T-cell (primary cell): ENCODE measurements at regions of chr10 and their contacts with region 1.

Region 1: GRCh38 chr10:69303632-69304051 is 25.3 kb downstream of the HK1 start:
- DNase-seq: no peak
- ATAC-seq: no peak
- H3K4me3 ChIP-seq: no peak overlapping the region
- H3K4me3 Mint-ChIP-seq: no peak overlapping the region
- H3K27ac ChIP-seq: no peak overlapping the region
- H3K27ac Mint-ChIP-seq: no peak overlapping the region
- H3K4me1 ChIP-seq: no peaks in the 10 kb centered on the region
- H3K4me1 Mint-ChIP-seq: no peaks in the 10 kb centered on the region
- H3K27me3 ChIP-seq: no peaks in the 10 kb centered on the region
- H3K27me3 Mint-ChIP-seq: no peaks in the 10 kb centered on the region

Region 2: DNA sequence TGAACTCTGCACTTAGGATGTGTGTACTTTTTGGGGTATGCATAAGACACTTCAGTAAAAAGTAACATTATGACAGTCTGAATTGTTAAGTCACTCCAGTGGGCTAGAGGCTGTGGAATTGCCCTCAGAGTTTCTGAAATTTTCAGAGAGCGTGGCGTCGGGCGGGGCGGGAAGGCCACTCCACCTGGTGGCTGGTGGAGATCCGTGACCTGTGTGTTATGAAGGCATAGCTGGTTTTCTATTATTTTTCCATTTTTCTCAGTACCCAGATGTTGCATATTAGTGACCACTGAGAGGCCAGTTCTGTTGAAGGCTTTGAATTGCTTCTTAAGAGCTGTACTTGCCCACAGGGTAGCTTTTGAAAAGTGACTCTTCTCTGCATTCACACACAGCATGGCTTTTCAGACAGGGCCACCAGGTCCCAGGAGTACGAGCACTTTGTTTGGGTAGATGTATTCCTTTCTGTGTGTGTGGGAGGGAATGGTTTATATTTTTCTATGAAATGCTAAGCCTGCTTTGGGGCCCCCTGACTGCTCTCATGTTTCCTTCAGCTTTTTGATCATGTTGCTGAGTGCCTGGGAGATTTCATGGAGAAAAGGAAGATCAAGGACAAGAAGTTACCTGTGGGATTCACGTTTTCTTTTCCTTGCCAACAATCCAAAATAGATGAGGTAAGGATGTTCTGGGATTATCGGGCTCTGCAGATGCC is 60.7 kb after region 1 on chr10:
- CTCF ChIA-PET with region 1: no interaction called
- POLR2A ChIA-PET with region 1: interaction called in 1 of 2 experiments, 12 read pairs
- DNase-seq: peak in 2 of 35 experiments; percentile 15 to 29
- ATAC-seq: no peak
- H3K4me3 ChIP-seq: no peak overlapping the region
- H3K4me3 Mint-ChIP-seq: no peak overlapping the region
- H3K27ac ChIP-seq: no peak overlapping the region
- H3K27ac Mint-ChIP-seq: peak overlapping the region; percentile 36 to 69
- H3K4me1 ChIP-seq: peaks cover 29 to 37% of the 10 kb centered on the region in 2 experiments
- H3K4me1 Mint-ChIP-seq: peaks cover 44 to 47% (median 45%) of the 10 kb centered on the region in 3 donors
- H3K27me3 ChIP-seq: no peaks in the 10 kb centered on the region
- H3K27me3 Mint-ChIP-seq: no peaks in the 10 kb centered on the region